K562 (cell line): ENCODE measurements at regions of chr1 and their contacts with region 1.

Region 1: GRCh38 chr1:52002038-52002917 is 11.8 kb upstream of the RAB3B start:
- DNase-seq: peak; percentile 89 to 91 (median 89)
- ATAC-seq: peak; percentile 96
- H3K4me3 ChIP-seq: no peak overlapping the region
- H3K27ac ChIP-seq: no peak overlapping the region
- H3K4me1 ChIP-seq: peaks cover 0 to 7% of the 10 kb centered on the region in 2 experiments; a peak in 4 of 5 replicates
- H3K27me3 ChIP-seq: peaks cover 0 to 3% of the 10 kb centered on the region in 2 experiments; a peak in 2 of 5 replicates
- CTCF ChIP-seq: peak; percentile 86 to 98 (median 94)
- EP300 ChIP-seq: no peak
- POLR2A ChIP-seq: no peak
- RAD21 ChIP-seq: peak; percentile 98 to 99

Region 2: DNA sequence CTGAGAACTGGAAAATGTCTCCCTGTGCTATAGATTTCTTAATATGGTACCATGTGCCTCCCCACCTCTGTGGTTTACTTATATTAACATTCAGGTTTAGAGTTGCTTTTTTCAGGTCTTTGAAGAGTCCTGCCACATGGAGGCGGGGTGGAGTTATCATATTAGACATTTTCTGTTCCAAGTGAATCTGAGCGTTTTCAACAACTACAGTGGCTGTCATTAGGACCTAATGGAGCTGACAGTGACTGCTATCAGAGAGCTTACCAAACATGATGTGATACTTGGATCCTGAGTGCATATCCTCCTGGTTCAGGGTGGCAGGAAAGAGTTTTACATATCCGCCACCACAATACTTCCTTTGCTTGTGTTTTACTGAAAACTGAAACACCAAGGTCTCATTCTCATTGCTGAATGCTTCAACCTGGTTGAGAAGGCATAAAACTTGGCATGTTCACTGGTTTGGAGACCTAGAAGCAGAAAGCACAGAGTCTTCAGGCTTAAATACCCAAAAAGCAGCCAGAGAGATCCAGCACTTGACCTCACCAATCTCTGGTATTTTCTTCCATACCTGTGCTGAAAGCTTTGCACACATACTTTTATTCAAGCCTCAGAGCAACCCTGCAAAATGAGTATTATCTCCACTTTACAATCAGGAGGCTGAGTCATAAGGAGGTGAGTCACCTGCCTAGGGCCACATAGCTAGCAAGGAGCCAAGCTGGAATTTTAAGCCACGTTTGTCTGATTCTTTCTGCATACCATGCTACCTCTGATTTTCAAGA is 432.8 kb before region 1 on chr1:
- CTCF ChIA-PET with region 1: no interaction called
- POLR2A ChIA-PET with region 1: no interaction called
- in situ Hi-C with region 1: no loop called
- intact Hi-C with region 1: loop called (anchors 5 kb)
- DNase-seq: peak; percentile 44 to 75 (median 50)
- ATAC-seq: peak; percentile 80
- H3K4me3 ChIP-seq: no peak overlapping the region
- H3K27ac ChIP-seq: peak overlapping the region; percentile 20; the same call in 1 of the 3 replicates
- H3K4me1 ChIP-seq: peaks cover 4 to 35% of the 10 kb centered on the region in 2 experiments; a peak in 4 of 5 replicates
- H3K27me3 ChIP-seq: no peaks in the 10 kb centered on the region
- CTCF ChIP-seq: peak; percentile 30 to 58 (median 31); a peak in 5 of 6 replicates
- EP300 ChIP-seq: peak; percentile 56
- POLR2A ChIP-seq: no peak
- RAD21 ChIP-seq: peak; percentile 59 to 72

Region 3: GRCh38 chr1:51792864-51793263 is 209.4 kb before region 1 on chr1:
- CTCF ChIA-PET with region 1: no interaction called
- POLR2A ChIA-PET with region 1: no interaction called
- in situ Hi-C with region 1: no loop called
- intact Hi-C with region 1: loop called (anchors 10 kb)
- DNase-seq: no peak
- ATAC-seq: peak; percentile 10; the same call in 2 of the 3 replicates
- H3K4me3 ChIP-seq: no peak overlapping the region
- H3K27ac ChIP-seq: no peak overlapping the region
- H3K4me1 ChIP-seq: no peaks in the 10 kb centered on the region
- H3K27me3 ChIP-seq: no peaks in the 10 kb centered on the region
- CTCF ChIP-seq: 0 out of 6 replicates have a peak, but pooled peaks of 1 of the 3 experiments have one; percentile 0
- EP300 ChIP-seq: no peak
- POLR2A ChIP-seq: no peak
- RAD21 ChIP-seq: peak in 1 of 2 experiments; percentile 8; a peak in 1 of 4 replicates

Region 4: DNA sequence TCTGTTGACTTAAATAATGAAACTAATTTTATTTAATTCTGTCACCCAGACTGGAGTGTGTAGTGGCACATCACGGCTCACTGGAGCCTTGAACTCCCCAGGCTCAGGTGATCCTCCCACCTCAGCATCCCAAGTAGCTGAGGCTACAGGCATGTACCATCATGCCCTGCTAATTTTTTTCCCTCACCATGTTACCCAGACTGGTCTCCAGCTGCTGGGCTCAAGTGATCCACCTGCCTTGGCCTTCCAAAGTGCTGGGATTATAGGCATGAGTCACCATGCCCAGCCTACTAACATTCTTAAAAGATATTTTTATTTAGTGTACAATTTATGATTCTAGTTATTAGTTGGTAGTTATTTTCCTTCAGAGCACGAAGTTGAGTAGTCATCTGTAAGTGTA is 173.2 kb before region 1 on chr1:
- CTCF ChIA-PET with region 1: no interaction called
- POLR2A ChIA-PET with region 1: no interaction called
- in situ Hi-C with region 1: no loop called
- intact Hi-C with region 1: loop called (anchors 10 kb)
- DNase-seq: no peak
- ATAC-seq: no peak
- H3K4me3 ChIP-seq: no peak overlapping the region
- H3K27ac ChIP-seq: no peak overlapping the region
- H3K4me1 ChIP-seq: no peaks in the 10 kb centered on the region
- H3K27me3 ChIP-seq: no peaks in the 10 kb centered on the region
- CTCF ChIP-seq: no peak
- EP300 ChIP-seq: no peak
- POLR2A ChIP-seq: no peak
- RAD21 ChIP-seq: no peak

Region 5: DNA sequence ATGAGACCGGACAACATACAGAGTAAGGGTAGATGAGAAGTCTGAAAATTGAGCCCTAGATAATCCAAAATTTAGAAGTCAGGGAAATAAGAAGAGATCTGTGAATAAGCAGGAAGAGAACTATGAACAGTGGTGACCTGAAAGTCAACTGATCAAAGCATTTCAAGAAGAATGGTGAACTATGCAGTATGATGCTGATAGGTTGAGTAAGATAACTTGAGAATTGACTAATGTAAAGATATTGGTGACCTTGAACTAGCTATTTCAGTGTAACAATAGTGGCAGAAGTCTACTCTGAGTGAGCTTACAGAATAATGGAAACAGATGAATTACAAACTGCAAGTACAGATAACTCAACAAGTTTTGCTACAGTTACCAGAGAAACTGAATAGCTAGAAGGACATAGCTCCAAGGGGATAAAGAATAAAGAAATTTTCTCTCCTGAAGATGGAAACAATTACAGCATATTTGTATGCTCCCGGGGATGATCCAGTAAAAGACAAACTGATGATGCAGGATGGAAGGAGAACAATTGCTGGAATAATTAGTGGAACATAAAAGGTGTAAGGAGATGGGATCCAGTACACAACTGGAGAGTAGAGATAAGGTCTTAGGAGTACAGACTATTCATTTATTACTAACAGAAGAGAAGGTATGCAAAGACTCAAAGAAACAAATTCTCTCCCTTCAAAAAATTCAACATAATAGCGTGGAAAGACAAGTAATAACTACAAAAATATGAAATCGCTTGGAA is 134.6 kb before region 1 on chr1:
- CTCF ChIA-PET with region 1: no interaction called
- POLR2A ChIA-PET with region 1: no interaction called
- in situ Hi-C with region 1: no loop called
- intact Hi-C with region 1: no loop called
- DNase-seq: peak in 2 of 4 experiments; percentile 44 to 56
- ATAC-seq: peak; percentile 25
- H3K4me3 ChIP-seq: no peak overlapping the region
- H3K27ac ChIP-seq: peak overlapping the region; percentile 5; the same call in 1 of the 3 replicates
- H3K4me1 ChIP-seq: peaks cover 26 to 34% of the 10 kb centered on the region in 2 experiments; a peak in 4 of 5 replicates
- H3K27me3 ChIP-seq: no peaks in the 10 kb centered on the region
- CTCF ChIP-seq: no peak
- EP300 ChIP-seq: no peak
- POLR2A ChIP-seq: no peak
- RAD21 ChIP-seq: no peak

Region 6: GRCh38 chr1:52179085-52179484 is 176.8 kb after region 1 on chr1:
- CTCF ChIA-PET with region 1: no interaction called
- POLR2A ChIA-PET with region 1: no interaction called
- in situ Hi-C with region 1: no loop called
- intact Hi-C with region 1: no loop called
- DNase-seq: no peak
- ATAC-seq: peak; percentile 47; the same call in 2 of the 3 replicates
- H3K4me3 ChIP-seq: no peak overlapping the region
- H3K27ac ChIP-seq: no peak overlapping the region
- H3K4me1 ChIP-seq: peaks cover 6 to 7% of the 10 kb centered on the region in 2 experiments; a peak in 3 of 5 replicates
- H3K27me3 ChIP-seq: no peaks in the 10 kb centered on the region
- CTCF ChIP-seq: no peak
- EP300 ChIP-seq: no peak
- POLR2A ChIP-seq: no peak
- RAD21 ChIP-seq: no peak